GM12878 (cell line): ENCODE measurements at regions of chr2 and their contacts with region 1.

Region 1: GRCh38 chr2:190277234-190278112 is 42.2 kb downstream of the HIBCH start:
- DNase-seq: no peak
- ATAC-seq: peak; percentile 89
- H3K4me3 ChIP-seq: no peak overlapping the region
- H3K27ac ChIP-seq: no peak overlapping the region
- H3K4me1 ChIP-seq: no peaks in the 10 kb centered on the region
- H3K27me3 ChIP-seq: no peaks in the 10 kb centered on the region
- CTCF ChIP-seq: peak in 2 of 3 experiments; percentile 12 to 39; a peak in 3 of 6 replicates
- EP300 ChIP-seq: no peak
- POLR2A ChIP-seq: no peak
- RAD21 ChIP-seq: peak; percentile 57

Region 2: DNA sequence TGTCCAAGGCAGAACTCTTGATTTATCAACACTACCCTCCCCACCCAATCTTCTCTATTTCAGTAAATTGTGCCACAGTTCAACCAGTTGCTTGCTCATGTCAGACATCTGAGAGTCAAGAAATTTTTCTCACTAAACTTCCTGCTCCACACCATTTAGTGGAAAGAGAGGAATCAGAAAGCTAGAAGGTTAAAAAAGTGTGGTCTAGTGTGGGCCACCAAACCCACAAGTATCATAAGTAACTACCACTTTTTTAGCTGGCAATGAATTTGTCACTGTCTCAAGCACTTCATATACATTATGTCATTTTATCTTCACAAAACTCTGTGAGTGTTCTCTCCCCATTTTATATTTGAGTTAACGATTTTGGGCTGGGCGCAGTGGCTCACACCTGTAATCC is 198.3 kb before region 1 on chr2:
- CTCF ChIA-PET with region 1: interaction called, 10 read pairs
- POLR2A ChIA-PET with region 1: no interaction called
- RAD21 ChIA-PET with region 1: no interaction called
- SMC1A ChIA-PET with region 1: no interaction called
- in situ Hi-C with region 1: no loop called
- intact Hi-C with region 1: no loop called
- DNase-seq: no peak
- ATAC-seq: no peak
- H3K4me3 ChIP-seq: no peak overlapping the region
- H3K27ac ChIP-seq: no peak overlapping the region
- H3K4me1 ChIP-seq: no peaks in the 10 kb centered on the region
- H3K27me3 ChIP-seq: no peaks in the 10 kb centered on the region; a peak in 1 of 4 replicates
- CTCF ChIP-seq: no peak
- EP300 ChIP-seq: no peak
- POLR2A ChIP-seq: no peak
- RAD21 ChIP-seq: no peak

Region 3: DNA sequence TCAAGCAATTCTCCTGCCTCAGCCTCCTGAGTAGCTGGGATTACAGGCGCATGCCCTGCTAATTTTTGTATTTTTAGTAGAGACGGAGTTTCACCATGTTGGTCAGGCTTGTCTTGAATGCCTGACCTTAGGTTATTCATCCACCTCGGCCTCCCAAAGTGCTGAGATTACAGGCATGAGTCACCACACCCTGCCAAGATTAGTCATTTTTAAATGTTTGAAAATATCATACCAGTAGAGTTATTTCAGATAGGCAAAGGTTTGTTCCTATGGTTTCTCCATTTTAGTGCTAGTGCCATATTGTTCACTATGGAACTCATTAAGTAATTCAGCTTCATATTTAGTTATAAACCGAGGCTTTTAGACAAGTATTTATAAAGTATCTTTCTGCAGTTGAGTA is 10.2 kb before region 1 on chr2:
- CTCF ChIA-PET with region 1: interaction called, 3 read pairs
- POLR2A ChIA-PET with region 1: no interaction called
- RAD21 ChIA-PET with region 1: no interaction called
- SMC1A ChIA-PET with region 1: interaction called, 11 read pairs
- in situ Hi-C with region 1: no loop called
- intact Hi-C with region 1: no loop called
- DNase-seq: no peak
- ATAC-seq: no peak
- H3K4me3 ChIP-seq: no peak overlapping the region
- H3K27ac ChIP-seq: no peak overlapping the region
- H3K4me1 ChIP-seq: no peaks in the 10 kb centered on the region
- H3K27me3 ChIP-seq: no peaks in the 10 kb centered on the region
- CTCF ChIP-seq: no peak
- EP300 ChIP-seq: no peak
- POLR2A ChIP-seq: no peak
- RAD21 ChIP-seq: no peak